ENCODE measurements at regions of chr4 and their contacts with region 1.

Region 1: DNA sequence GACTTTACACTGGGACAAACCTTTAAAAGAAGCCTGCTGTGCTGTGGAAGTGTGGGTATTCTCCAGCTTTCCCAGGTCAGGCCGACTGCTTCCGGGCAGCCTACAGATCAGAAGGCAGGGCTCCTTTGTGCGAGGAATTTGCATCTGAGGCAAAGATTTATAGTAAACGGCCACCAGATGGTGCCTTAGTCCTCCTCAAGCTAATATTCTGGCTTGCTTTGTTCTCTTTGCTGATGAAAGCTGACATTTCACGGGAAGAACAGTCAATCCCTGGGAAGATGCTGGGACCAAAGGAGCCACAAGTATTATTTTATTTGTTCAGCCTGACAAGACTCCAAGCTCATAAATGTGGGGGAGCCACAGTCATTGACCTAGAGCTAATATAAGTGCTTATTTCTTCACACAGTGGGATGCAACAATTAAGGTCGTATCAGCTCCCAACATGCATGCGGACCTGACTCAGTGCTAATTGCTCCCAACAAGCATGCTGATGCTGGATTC is 120.7 kb upstream of the TRIM2 start:
- DNase-seq: peak in 2 of 3 donors; percentile 58 to 81
- ATAC-seq: peak; percentile 94
- H3K4me3 ChIP-seq: no peak overlapping the region
- H3K4me1 ChIP-seq: peaks cover 5% of the 10 kb centered on the region
- CTCF ChIP-seq: peak; percentile 21

Region 2: DNA sequence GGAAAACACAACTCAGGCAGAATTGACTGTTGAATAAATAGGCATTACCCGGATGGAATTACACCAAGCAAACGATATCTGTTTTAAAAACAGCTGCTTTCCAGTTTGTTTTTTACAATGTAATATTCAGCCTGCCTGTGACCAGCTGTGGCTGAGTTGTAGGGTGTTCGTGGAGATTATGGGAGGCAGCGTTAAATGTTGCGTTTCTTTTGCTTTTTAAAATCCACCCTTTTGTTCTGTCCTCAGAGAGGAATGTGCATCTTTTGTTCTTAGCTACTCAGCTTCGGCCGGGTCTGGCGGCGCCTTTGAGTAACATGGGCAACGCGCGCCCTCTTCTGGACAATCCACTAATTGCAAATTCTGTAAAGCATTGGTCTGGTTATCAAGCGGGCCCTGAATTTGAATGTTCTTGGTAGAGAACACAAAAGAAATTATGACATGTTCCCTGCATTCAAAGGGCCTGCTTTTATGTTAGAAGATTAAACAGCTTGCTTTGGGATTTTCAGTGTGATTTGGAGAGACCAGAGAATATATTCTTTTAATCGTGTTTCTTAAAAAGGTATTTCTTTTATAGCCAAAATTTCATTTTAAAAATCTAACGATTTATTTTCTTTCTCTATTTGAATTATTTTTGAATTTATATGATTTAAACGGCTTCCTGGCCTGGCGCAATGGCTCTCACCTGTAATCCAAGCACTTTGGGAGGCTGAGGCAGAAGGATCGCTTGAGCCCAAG is 44.4 kb after region 1 on chr4:
- intact Hi-C with region 1: loop called in 1 of 2 experiments (anchors 5 kb)
- DNase-seq: peak; percentile 69 to 95 (median 74)
- ATAC-seq: peak; percentile 94
- H3K4me3 ChIP-seq: no peak overlapping the region
- H3K4me1 ChIP-seq: peaks cover 3% of the 10 kb centered on the region
- CTCF ChIP-seq: peak; percentile 68

Region 3: GRCh38 chr4:153318696-153319320 is 235.3 kb after region 1 on chr4:
- intact Hi-C with region 1: no loop called
- DNase-seq: peak in 1 of 3 donors; percentile 52
- ATAC-seq: peak; percentile 47
- H3K4me3 ChIP-seq: no peak overlapping the region
- H3K4me1 ChIP-seq: no peaks in the 10 kb centered on the region
- CTCF ChIP-seq: no peak

Region 4: GRCh38 chr4:153344131-153345010 is 260.9 kb after region 1 on chr4 and contains the start of gene MND1:
- intact Hi-C with region 1: no loop called
- DNase-seq: peak; percentile 89 to 91 (median 90)
- ATAC-seq: peak; percentile 93
- H3K4me3 ChIP-seq: peak within 1 kb of the TSS; percentile 54
- H3K4me1 ChIP-seq: peaks cover 3% of the 10 kb centered on the region
- CTCF ChIP-seq: peak; percentile 86
- total RNA-seq, gene MND1: 1.4 to 5.3 (median 1.6) TPM